Activated CD4-positive, alpha-beta T cell treated with anti-CD3 and anti-CD28 coated beads, Interleukin-2, amount 10 ng/mL, durations not matched to agents 7 days and 5 days (primary cell): ENCODE measurements at regions of chr2 and their contacts with region 1.

Region 1: GRCh38 chr2:240579771-240580614 is 6.5 kb upstream of the CAPN10 start:
- DNase-seq: peak; percentile 77
- H3K4me3 Mint-ChIP-seq: no peak overlapping the region
- H3K27ac Mint-ChIP-seq: peak overlapping the region; percentile 85
- H3K4me1 Mint-ChIP-seq: peaks cover 53% of the 10 kb centered on the region
- H3K27me3 Mint-ChIP-seq: no peaks in the 10 kb centered on the region

Region 2: DNA sequence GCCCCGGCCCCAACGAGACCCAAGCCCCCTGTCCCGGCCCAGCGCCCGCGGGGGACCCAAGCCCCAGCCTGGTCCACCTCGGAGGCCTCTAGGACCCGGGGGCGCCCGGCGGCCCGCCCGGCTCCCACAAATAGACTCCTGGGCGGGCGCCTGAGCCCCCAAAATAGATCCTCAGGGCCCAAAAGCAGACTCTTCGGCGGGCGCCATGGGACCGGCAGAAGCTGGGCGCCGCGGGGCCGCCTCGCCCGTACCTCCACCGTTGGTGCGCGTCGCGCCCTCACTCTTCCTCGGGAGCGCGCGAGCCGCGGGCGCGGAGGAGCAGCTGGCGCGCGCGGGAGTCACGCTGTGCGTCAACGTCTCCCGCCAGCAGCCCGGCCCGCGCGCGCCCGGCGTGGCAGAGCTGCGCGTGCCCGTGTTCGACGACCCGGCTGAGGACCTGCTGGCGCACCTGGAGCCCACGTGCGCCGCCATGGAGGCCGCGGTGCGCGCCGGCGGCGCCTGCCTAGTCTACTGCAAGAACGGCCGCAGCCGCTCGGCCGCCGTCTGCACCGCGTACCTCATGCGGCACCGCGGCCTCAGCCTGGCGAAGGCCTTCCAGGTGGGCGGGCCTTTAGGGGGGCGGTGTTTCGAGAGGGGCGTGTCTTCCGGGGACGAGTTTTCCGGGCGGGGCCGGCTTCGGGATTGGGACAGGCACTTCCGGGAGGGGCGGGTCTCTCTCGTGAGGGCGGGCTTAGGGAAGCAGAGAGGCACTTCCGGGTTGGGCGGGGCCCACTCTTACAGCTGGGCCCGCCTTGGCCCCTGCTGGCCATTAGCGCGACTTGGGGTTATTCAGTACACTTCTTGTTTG is 19.3 kb before region 1 on chr2:
- CTCF ChIA-PET with region 1: interaction called, 67 read pairs
- POLR2A ChIA-PET with region 1: interaction called, 9 read pairs
- DNase-seq: peak; percentile 100
- H3K4me3 Mint-ChIP-seq: peak overlapping the region; percentile 79
- H3K27ac Mint-ChIP-seq: peak overlapping the region; percentile 83
- H3K4me1 Mint-ChIP-seq: peaks cover 74% of the 10 kb centered on the region
- H3K27me3 Mint-ChIP-seq: no peaks in the 10 kb centered on the region

Region 3: GRCh38 chr2:241036397-241036963 is 456.5 kb after region 1 on chr2:
- CTCF ChIA-PET with region 1: no interaction called
- POLR2A ChIA-PET with region 1: no interaction called
- DNase-seq: peak; percentile 79
- H3K4me3 Mint-ChIP-seq: peak overlapping the region; percentile 64
- H3K27ac Mint-ChIP-seq: peak overlapping the region; percentile 83
- H3K4me1 Mint-ChIP-seq: peaks cover 30% of the 10 kb centered on the region
- H3K27me3 Mint-ChIP-seq: no peaks in the 10 kb centered on the region